ENCODE measurements at regions of chr10 and their contacts with region 1.

Region 1: DNA sequence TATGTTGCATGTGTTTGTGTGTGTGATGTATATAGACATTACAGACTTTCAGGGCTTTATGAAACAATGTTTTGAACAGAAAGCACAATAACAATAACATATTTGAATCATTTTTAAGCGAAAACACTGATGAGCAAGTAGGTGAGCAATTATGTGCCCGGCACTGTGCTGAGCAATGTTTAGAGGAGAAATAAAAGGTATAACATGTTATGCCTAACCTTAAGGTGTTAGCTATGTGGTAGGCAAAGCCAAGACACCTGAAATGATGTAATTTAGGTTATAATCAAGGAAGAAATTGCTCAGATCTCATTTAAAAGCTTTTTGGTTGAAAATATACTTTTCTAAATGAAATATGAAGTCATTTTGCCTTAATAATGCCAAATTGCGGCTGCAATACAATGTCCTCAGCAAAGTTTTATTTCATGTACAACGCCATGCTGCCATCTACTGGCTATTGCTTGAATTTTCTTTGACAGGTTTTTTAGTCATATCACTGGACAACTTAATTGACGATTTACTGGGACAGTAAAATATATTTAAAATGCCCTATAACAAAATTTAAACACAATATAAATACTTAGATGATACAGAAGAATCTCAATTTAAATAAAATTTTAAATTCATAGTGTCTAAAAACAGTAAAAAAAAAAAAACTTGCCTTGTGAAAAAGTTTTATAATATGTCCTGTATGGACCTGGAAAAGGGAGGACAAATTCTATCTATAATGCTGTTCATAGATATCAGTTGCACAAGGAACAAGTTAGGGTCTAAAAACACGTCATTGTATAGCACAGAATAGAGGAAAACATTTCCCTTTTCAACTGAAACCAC is 131.1 kb upstream of the CDK1 start:
- DNase-seq: peak; percentile 60
- H3K4me3 Mint-ChIP-seq: no peak overlapping the region
- H3K27ac Mint-ChIP-seq: no peak overlapping the region
- H3K4me1 Mint-ChIP-seq: peaks cover 9% of the 10 kb centered on the region
- H3K27me3 Mint-ChIP-seq: no peaks in the 10 kb centered on the region
- CTCF ChIP-seq: peak; percentile 83

Region 2: DNA sequence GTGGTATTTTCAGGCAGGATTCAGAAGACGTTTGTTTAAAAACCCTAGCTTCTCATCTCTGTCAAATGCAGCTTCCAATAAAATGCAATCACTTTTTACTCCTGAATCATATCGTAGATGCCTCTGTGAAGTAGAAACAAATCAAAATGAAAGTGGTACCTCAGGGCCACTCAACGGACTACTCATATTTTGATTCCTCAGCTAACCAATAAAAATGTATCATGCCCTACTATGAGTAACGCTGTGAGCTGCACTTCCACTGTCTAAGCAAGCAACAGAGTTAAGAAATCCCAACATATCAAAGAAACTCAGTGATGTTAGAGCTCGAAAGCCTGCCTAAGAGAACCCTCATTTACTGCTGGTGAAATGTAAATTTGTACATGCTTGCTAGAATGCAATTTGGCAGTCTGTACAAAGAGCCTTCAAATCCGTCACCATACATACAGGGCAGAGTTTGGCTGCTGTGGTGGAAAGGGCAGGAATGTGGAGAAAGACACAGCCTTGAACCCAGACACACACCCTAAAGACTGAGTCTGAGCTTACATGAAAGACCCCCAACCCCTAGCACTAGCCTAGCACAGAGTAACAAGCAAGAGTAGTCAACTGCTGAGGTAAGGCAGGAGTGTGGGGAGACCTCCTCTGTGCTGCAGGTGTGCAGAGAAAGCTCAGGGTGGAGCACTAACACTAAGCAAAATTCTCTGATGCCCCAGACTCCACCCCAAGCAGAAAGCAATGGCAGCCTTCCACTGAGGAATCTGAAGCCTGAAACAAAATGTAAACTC is 409.0 kb before region 1 on chr10:
- CTCF ChIA-PET with region 1: no interaction called
- intact Hi-C with region 1: loop called (anchors 2 kb)
- DNase-seq: peak; percentile 61
- H3K4me3 Mint-ChIP-seq: no peak overlapping the region
- H3K27ac Mint-ChIP-seq: no peak overlapping the region
- H3K4me1 Mint-ChIP-seq: peaks cover 39% of the 10 kb centered on the region
- H3K27me3 Mint-ChIP-seq: no peaks in the 10 kb centered on the region
- CTCF ChIP-seq: peak; percentile 42

Region 3: DNA sequence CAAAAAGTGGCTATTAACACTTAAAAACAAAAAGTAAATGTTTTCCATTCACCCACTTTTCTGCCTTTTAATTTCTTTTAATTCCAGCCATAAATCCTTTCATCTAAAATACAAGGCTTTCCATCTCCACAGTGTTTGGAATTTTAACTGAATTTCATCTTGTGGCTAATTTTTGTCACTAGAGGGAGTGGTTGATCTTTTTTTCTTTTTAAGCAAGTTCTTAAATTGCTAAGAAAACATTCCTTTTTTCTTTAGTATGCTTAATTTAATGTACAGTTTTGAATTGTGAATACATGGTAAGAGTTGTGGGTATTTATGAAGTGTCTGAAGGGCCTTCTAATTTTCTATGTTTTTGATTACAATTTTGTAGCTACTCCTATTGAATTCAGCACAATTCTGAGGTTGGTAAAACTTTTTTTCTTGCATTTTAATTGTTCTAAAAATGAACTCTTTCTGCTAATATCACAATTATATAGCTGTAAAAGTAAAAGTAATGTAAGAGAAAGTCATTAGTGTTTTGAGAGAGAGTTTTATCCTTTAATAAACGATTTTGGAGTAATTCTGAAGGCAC is 202.6 kb before region 1 on chr10:
- CTCF ChIA-PET with region 1: interaction called, 10 read pairs
- intact Hi-C with region 1: loop called (anchors 1 kb)
- DNase-seq: no peak
- H3K4me3 Mint-ChIP-seq: no peak overlapping the region
- H3K27ac Mint-ChIP-seq: no peak overlapping the region
- H3K4me1 Mint-ChIP-seq: peaks cover 27% of the 10 kb centered on the region
- H3K27me3 Mint-ChIP-seq: no peaks in the 10 kb centered on the region
- CTCF ChIP-seq: peak; percentile 61

Region 4: GRCh38 chr10:60549686-60550085 is 97.5 kb before region 1 on chr10:
- CTCF ChIA-PET with region 1: no interaction called
- intact Hi-C with region 1: loop called (anchors 1 kb)
- DNase-seq: peak; percentile 5
- H3K4me3 Mint-ChIP-seq: no peak overlapping the region
- H3K27ac Mint-ChIP-seq: no peak overlapping the region
- H3K4me1 Mint-ChIP-seq: no peaks in the 10 kb centered on the region
- H3K27me3 Mint-ChIP-seq: no peaks in the 10 kb centered on the region
- CTCF ChIP-seq: peak; percentile 62

Region 5: DNA sequence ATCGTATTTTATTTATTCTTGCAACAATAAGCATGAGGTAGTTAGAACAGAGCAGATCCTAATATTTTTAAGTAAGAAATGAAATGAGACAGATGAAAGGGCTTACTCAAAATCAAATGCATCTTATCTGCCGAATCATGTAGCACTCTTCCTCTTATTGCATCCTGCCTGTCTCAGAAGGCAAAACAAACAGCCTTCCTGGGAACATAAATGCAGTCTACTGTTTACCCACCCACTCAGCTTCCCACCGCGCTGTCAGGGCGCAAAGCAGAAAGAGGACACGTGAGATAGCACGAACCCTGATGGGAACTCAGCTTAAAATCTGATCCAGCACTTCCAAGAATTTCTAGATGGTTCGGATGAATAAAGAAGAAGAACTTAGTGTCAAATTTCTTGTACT is 16.7 kb after region 1 on chr10:
- CTCF ChIA-PET with region 1: interaction called, 11 read pairs
- intact Hi-C with region 1: no loop called
- DNase-seq: no peak
- H3K4me3 Mint-ChIP-seq: no peak overlapping the region
- H3K27ac Mint-ChIP-seq: no peak overlapping the region
- H3K4me1 Mint-ChIP-seq: peaks cover 19% of the 10 kb centered on the region
- H3K27me3 Mint-ChIP-seq: no peaks in the 10 kb centered on the region
- CTCF ChIP-seq: no peak

Region 6: GRCh38 chr10:60769406-60769805 is 122.2 kb after region 1 on chr10:
- CTCF ChIA-PET with region 1: no interaction called
- intact Hi-C with region 1: loop called (anchors 2 kb)
- DNase-seq: no peak
- H3K4me3 Mint-ChIP-seq: no peak overlapping the region
- H3K27ac Mint-ChIP-seq: no peak overlapping the region
- H3K4me1 Mint-ChIP-seq: peaks cover 14% of the 10 kb centered on the region
- H3K27me3 Mint-ChIP-seq: no peaks in the 10 kb centered on the region
- CTCF ChIP-seq: no peak